ENCODE measurements at regions of chr1 and their contacts with region 1.

Region 1: GRCh38 chr1:171521567-171521966 is 36.2 kb downstream of the PRRC2C start:
- DNase-seq: no peak
- ATAC-seq: no peak
- H3K4me3 ChIP-seq: no peak overlapping the region
- H3K27ac ChIP-seq: no peak overlapping the region
- H3K4me1 ChIP-seq: no peaks in the 10 kb centered on the region
- H3K27me3 ChIP-seq: no peaks in the 10 kb centered on the region
- CTCF ChIP-seq: no peak

Region 2: GRCh38 chr1:171480035-171480434 is 41.5 kb before region 1 on chr1:
- intact Hi-C with region 1: no loop called
- DNase-seq: no peak
- ATAC-seq: no peak
- H3K4me3 ChIP-seq: no peak overlapping the region
- H3K27ac ChIP-seq: no peak overlapping the region
- H3K4me1 ChIP-seq: peaks cover 2% of the 10 kb centered on the region
- H3K27me3 ChIP-seq: no peaks in the 10 kb centered on the region
- CTCF ChIP-seq: no peak

Region 3: GRCh38 chr1:171583581-171584201 is 62.1 kb after region 1 on chr1:
- intact Hi-C with region 1: loop called in 1 of 2 experiments (anchors 10 kb)
- DNase-seq: no peak
- ATAC-seq: no peak
- H3K4me3 ChIP-seq: no peak overlapping the region
- H3K27ac ChIP-seq: no peak overlapping the region
- H3K4me1 ChIP-seq: no peaks in the 10 kb centered on the region
- H3K27me3 ChIP-seq: no peaks in the 10 kb centered on the region
- CTCF ChIP-seq: no peak

Region 4: DNA sequence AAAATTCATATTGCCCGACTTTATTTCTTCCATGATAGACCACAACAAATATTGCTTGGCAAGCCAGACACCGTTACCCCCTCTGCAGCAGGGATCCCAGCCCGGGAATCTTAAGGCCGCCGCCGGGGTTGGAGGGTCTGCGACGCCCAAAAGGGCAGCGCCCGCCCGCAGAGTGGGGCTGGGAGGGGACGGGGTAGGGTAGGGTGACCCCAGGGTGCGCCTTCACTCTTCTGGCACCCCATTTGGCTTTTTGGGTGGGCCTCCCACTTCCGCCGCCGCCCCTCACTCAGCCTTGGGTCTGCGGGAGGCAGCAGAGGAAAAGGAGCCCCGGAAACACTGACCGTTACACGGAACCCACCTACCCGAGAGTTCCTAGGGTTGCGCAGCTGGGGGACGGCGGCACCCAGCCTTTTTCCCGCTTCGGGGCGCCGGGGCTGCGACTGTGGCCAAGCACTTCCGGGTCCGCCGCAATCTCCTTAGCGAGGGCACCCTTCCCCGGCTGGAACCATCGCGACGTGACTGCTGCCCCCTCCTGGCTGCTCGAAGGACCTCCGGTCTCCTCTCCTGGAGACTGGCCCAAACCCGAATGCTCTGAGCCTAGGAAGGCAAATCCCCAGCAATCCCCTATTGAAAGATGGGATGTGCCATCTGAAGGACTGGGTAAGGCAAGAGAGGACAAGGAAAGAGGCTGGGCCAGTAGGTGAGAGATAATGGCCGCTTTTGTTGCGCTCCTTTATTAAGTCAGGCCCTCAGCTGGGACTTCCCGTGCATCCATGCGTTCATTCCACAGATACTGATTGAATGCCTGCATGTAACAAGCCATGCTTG is 922.3 kb after region 1 on chr1 and contains the start of gene PIGC:
- intact Hi-C with region 1: no loop called
- DNase-seq: peak; percentile 90 to 96
- ATAC-seq: peak; percentile 93 to 99 (median 96)
- H3K4me3 ChIP-seq: peak within 1 kb of the TSS; percentile 99
- H3K27ac ChIP-seq: peak within 1 kb of the TSS; percentile 81
- H3K4me1 ChIP-seq: peaks cover 20% of the 10 kb centered on the region
- H3K27me3 ChIP-seq: no peaks in the 10 kb centered on the region
- CTCF ChIP-seq: peak; percentile 81
- total RNA-seq, gene PIGC: 10.8 to 13.8 (median 12.7) TPM